H1 (cell line): ENCODE measurements at regions of chr1 and their contacts with region 1.

Region 1: GRCh38 chr1:202561726-202562443 is 148.4 kb downstream of the SYT2 start:
- DNase-seq: no peak
- H3K4me3 ChIP-seq: no peak overlapping the region
- H3K27ac ChIP-seq: no peak overlapping the region
- H3K4me1 ChIP-seq: peaks cover 3 to 18% (median 8%) of the 10 kb centered on the region in 4 experiments; a peak in 6 of 7 replicates
- H3K27me3 ChIP-seq: no peaks in the 10 kb centered on the region
- CTCF ChIP-seq: peak in 2 of 3 experiments; percentile 30 to 60; a peak in 3 of 4 replicates
- EP300 ChIP-seq: no peak
- POLR2A ChIP-seq: no peak
- RAD21 ChIP-seq: peak; percentile 37 to 46; a peak in 3 of 4 replicates

Region 2: DNA sequence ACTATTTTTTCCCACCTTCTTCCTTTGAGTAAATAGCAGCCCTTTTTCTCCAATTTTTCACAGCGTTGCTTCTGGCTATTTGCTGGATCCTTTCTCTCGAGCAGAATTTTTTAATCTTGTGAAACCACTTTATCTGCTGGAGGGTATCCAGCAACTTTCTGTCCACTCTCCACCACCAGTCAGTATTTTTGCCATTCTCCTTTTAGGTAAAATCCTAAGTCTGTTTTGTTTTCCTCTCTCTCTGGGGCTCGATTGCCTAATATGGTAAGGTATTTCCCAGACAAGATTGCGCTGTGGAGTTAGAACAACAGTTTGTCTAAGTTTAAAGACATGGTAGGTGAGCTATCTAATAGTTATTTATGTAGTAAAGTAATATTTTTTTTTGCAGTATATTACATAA is 56.5 kb before region 1 on chr1:
- CTCF ChIA-PET with region 1: interaction called, 14 read pairs
- POLR2A ChIA-PET with region 1: no interaction called
- DNase-seq: no peak
- H3K4me3 ChIP-seq: no peak overlapping the region
- H3K27ac ChIP-seq: no peak overlapping the region
- H3K4me1 ChIP-seq: peaks cover 0 to 3% (median 0%) of the 10 kb centered on the region in 4 experiments; a peak in 2 of 7 replicates
- H3K27me3 ChIP-seq: no peaks in the 10 kb centered on the region
- CTCF ChIP-seq: no peak
- EP300 ChIP-seq: no peak
- POLR2A ChIP-seq: no peak
- RAD21 ChIP-seq: no peak

Region 3: GRCh38 chr1:202540014-202540413 is 21.9 kb before region 1 on chr1:
- CTCF ChIA-PET with region 1: interaction called, 11 read pairs
- POLR2A ChIA-PET with region 1: no interaction called
- DNase-seq: no peak
- H3K4me3 ChIP-seq: no peak overlapping the region
- H3K27ac ChIP-seq: no peak overlapping the region
- H3K4me1 ChIP-seq: peaks cover 0 to 4% (median 0%) of the 10 kb centered on the region in 4 experiments; a peak in 2 of 7 replicates
- H3K27me3 ChIP-seq: no peaks in the 10 kb centered on the region
- CTCF ChIP-seq: no peak
- EP300 ChIP-seq: no peak
- POLR2A ChIP-seq: no peak
- RAD21 ChIP-seq: no peak

Region 4: DNA sequence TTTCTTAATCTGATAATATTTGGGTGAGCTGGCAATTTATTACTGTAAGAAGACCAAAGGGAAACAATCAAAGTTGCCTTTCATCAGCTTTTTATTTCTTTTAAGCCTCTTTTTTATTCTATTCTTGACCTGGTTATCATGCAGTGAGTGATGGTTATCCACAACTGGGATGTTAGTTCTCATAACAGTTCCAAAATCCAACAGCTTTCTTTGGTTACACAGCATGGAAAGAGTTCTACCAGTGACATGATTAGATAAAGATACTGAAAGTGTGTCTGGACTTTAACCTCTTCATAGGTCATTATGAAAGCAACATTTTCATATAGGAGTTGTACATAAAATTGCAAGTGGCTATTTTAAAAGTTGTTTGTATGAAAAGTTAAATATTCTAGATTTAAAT is 14.7 kb before region 1 on chr1:
- CTCF ChIA-PET with region 1: interaction called, 11 read pairs
- POLR2A ChIA-PET with region 1: interaction called, 3 read pairs
- DNase-seq: no peak
- H3K4me3 ChIP-seq: no peak overlapping the region
- H3K27ac ChIP-seq: no peak overlapping the region
- H3K4me1 ChIP-seq: no peaks in the 10 kb centered on the region
- H3K27me3 ChIP-seq: no peaks in the 10 kb centered on the region
- CTCF ChIP-seq: no peak
- EP300 ChIP-seq: no peak
- POLR2A ChIP-seq: no peak
- RAD21 ChIP-seq: no peak

Region 5: DNA sequence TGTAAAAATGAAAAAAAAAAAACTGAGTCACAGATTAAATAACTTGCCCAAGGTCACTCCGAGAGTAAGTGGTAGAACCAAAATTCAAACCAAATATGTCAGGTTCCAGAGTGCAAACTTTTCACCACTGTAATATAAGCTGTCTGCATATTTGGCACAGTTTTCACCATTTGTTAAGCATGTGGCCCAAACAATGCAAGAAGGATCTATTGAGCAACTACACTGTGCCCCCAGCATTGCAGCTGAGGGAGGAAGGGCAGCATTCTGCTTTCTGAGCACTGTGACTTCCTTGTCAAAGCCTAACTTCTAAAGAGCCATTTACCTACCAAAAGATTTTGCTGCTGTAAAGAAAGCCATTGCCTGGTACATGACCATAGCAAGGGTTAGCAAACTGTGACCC is 14.9 kb after region 1 on chr1:
- CTCF ChIA-PET with region 1: interaction called, 55 read pairs
- POLR2A ChIA-PET with region 1: interaction called, 4 read pairs
- DNase-seq: no peak
- H3K4me3 ChIP-seq: no peak overlapping the region
- H3K27ac ChIP-seq: no peak overlapping the region
- H3K4me1 ChIP-seq: peaks cover 0 to 27% (median 19%) of the 10 kb centered on the region in 4 experiments; a peak in 6 of 7 replicates
- H3K27me3 ChIP-seq: no peaks in the 10 kb centered on the region
- CTCF ChIP-seq: no peak
- EP300 ChIP-seq: no peak
- POLR2A ChIP-seq: no peak
- RAD21 ChIP-seq: no peak

Region 6: DNA sequence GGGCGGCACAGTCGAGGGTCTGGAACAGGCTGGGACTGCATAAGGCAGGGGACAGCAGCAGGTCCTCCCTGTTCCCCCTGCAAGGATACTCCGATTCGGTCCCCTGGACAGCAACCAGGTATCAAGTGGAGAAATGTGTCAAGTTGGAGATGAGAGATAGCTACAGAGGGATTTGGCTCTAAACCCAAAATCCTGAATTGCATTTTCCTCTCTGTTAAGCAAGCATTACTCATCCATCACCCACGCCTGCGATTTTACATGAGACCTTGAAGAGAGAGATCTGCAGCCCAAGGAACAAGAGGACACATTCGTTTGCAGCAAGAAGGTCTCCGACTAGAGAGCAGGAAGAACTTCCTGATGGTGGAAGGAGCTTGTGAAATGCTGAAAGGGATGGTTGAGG is 126.5 kb after region 1 on chr1:
- CTCF ChIA-PET with region 1: no interaction called
- POLR2A ChIA-PET with region 1: no interaction called
- DNase-seq: no peak
- H3K4me3 ChIP-seq: no peak overlapping the region
- H3K27ac ChIP-seq: no peak overlapping the region
- H3K4me1 ChIP-seq: peaks cover 0 to 6% (median 1%) of the 10 kb centered on the region in 4 experiments; a peak in 2 of 7 replicates
- H3K27me3 ChIP-seq: 0 out of 7 replicates have a peak, but pooled peaks cover 0 to 3% (median 0%) of the 10 kb centered on the region in 4 experiments
- CTCF ChIP-seq: no peak
- EP300 ChIP-seq: no peak
- POLR2A ChIP-seq: no peak
- RAD21 ChIP-seq: no peak